ENCODE measurements at regions of chr5 and their contacts with region 1.

Region 1: DNA sequence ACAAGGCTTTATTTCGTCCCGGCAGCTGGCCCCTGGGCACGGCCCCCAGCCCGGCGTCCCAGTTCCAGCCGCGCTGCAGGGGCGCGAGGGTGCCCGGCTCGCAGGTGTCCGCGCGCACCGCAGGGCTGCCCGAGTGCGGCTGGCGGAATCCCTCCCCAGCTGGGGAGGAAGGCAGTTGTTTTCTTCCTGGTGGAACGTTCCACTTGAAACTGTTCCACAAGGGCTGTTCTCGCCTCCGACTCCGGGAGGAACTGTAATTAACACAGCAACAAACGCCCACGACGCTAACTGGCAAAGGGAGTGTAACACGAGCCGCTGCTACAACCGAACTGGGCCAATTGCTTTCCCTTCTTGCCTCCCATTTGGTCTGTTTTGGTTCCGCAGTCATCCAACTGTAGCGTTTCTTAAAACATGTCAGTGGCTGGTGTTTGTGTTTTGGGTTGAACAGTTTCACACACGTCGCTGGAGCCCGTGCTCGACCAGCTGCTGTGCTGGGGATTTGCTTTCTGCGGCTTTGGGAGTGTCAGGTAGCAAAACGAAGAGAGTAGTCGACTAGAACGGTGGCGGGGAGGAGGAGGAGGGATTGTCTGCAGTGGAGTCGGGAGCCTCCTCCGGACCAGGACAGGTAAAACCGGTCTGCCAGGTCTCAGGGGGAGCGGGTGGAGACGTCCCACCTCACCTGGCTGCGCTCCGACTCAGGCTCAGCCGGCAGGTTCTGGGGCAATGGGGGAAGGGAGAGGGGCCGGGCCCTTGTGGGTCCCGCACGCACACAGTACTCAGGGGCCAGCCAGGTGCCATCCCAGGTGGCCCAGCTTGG is 131.6 kb upstream of the NIPBL start:
- DNase-seq: no peak
- H3K4me3 ChIP-seq: peak overlapping the region; percentile 42
- H3K27me3 ChIP-seq: peaks cover 16% of the 10 kb centered on the region
- CTCF ChIP-seq: no peak

Region 2: DNA sequence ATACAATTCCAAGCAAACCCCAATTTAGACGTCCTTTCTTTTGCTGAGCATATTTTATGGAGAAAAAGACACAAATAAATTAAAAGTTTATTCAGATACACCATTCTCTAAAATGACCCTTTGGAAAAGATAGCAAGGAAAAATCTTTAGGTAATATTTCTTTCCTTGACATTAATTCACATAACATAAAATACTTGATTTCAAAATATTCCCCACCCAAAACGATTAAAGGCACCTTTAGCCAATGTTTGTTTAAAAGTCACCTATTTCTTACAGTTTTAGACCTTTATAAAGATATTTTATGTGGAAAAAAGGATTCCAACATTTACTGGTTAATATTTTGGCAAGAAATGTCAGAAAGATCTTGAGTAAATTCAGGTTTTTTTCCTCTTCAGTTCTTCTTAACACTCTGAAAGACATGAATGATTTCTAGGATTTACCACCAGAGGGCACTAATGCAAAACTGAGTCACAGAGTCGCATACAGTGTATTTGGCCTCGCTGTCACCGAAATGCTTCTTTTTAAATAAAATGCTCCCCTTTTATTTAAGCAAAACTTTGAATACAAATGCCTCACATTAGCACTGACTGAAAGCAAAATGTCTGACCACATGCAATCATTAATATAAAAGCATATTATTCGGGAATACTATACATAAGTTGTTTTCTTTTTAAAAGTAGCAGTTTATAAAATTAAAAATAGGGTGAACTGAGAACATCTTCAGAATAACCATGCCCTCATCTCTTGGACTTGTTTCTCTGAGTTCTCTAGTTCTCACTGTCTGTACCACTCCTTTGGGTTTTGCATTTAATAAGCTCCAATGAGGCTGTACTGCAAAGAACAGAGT is 16.1 kb before region 1 on chr5:
- CTCF ChIA-PET with region 1: interaction called, 31 read pairs
- POLR2A ChIA-PET with region 1: interaction called, 9 read pairs
- DNase-seq: no peak
- H3K4me3 ChIP-seq: no peak overlapping the region
- H3K27me3 ChIP-seq: peaks cover 2% of the 10 kb centered on the region; the same call in 1 of the 2 replicates
- CTCF ChIP-seq: peak; percentile 66

Region 3: DNA sequence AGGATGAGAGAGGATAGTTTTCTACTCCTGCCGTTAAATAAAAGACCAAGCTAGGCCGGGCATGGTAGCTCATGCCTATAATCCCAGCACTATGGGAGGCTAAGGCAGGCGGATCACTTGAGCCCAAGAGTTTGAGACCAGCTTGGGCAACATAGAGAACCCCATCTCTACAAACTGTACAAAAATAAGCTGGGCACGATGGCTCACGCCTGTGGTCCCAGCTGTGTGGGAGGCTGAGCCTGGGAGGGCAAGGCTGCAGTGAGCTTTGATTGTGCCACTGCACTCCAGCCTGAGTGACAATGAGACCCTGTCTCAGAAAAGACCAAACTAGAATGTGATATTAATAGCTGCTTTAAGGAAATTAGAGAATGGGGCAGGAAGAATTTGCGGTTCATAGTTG is 290.0 kb after region 1 on chr5:
- CTCF ChIA-PET with region 1: no interaction called
- POLR2A ChIA-PET with region 1: no interaction called
- DNase-seq: no peak
- H3K4me3 ChIP-seq: no peak overlapping the region
- H3K27me3 ChIP-seq: no peaks in the 10 kb centered on the region
- CTCF ChIP-seq: no peak

Measured in BJ (cell line).